Breast epithelium (tissue), 4 donors: ENCODE measurements at regions of chr16 and their contacts with region 1.

Region 1: GRCh38 chr16:27235055-27235937 is 32.0 kb downstream of the KDM8 start:
- DNase-seq: peak; percentile 80 to 81
- H3K4me3 ChIP-seq: peak overlapping the region in 2 of 3 donors; percentile 1 to 34
- H3K27ac ChIP-seq: peak overlapping the region; percentile 78 to 88
- H3K4me1 ChIP-seq: peaks cover 7% of the 10 kb centered on the region in 2 donors
- H3K27me3 ChIP-seq: no peaks in the 10 kb centered on the region
- CTCF ChIP-seq: peak; percentile 28 to 77 (median 73)
- POLR2A ChIP-seq: no peak

Region 2: GRCh38 chr16:27253526-27253930 is 18.2 kb after region 1 on chr16:
- intact Hi-C with region 1: no loop called
- DNase-seq: no peak
- H3K4me3 ChIP-seq: no peak overlapping the region
- H3K27ac ChIP-seq: peak overlapping the region; percentile 38 to 86
- H3K4me1 ChIP-seq: peaks cover 2 to 9% of the 10 kb centered on the region in 2 donors
- H3K27me3 ChIP-seq: no peaks in the 10 kb centered on the region
- CTCF ChIP-seq: no peak
- POLR2A ChIP-seq: no peak

Region 3: DNA sequence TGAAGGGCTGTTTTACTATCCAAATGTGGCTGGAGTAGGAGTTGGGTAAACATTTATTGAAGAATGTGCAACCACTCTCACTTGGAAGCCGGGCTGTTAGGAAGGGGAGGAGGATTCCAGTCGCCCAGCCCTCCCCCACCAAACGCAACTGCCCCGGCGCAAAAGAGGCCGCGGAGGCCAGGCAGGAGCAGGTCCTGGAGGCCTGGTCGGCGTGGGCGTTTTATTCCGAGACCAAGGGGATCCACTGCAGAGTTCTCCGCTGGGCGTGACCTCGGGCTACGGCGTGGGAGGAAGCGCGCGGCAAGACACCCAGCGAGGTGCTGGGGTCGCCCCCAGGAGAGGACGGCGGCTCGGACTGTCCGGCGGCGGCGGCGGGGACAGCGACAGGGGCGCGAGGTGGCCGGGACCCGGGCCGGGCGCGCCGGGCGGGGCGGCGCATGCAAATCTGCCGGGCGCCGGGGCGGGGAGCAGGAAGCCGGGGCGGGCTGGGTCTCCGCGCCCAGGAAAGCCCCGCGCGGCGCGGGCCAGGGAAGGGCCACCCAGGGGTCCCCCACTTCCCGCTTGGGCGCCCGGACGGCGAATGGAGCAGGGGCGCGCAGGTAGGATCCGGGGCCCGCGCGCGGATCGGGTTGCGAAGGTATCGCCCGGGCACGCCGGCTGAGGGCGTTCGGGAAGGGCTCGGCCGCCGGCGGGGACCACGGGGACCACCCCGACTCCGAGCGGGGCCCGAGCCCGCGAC is 78.3 kb after region 1 on chr16 and contains the start of gene IL4R:
- intact Hi-C with region 1: loop called (anchors 10 kb)
- DNase-seq: peak in 1 of 2 donors; percentile 81
- H3K4me3 ChIP-seq: peak within 1 kb of the TSS; percentile 90 to 100 (median 95)
- H3K27ac ChIP-seq: peak within 1 kb of the TSS; percentile 97 to 100
- H3K4me1 ChIP-seq: peaks cover 0 to 8% of the 10 kb centered on the region in 2 donors
- H3K27me3 ChIP-seq: no peaks in the 10 kb centered on the region
- CTCF ChIP-seq: no peak
- POLR2A ChIP-seq: no peak
- total RNA-seq, gene IL4R: 18.7 to 53.4 (median 51.8) TPM

Region 4: GRCh38 chr16:27625050-27625697 is 389.9 kb after region 1 on chr16:
- intact Hi-C with region 1: no loop called
- DNase-seq: no peak
- H3K4me3 ChIP-seq: no peak overlapping the region
- H3K27ac ChIP-seq: no peak overlapping the region
- H3K4me1 ChIP-seq: no peaks in the 10 kb centered on the region
- H3K27me3 ChIP-seq: no peaks in the 10 kb centered on the region
- CTCF ChIP-seq: no peak
- POLR2A ChIP-seq: no peak